ENCODE measurements at regions of chr1 and their contacts with region 1.

Region 1: DNA sequence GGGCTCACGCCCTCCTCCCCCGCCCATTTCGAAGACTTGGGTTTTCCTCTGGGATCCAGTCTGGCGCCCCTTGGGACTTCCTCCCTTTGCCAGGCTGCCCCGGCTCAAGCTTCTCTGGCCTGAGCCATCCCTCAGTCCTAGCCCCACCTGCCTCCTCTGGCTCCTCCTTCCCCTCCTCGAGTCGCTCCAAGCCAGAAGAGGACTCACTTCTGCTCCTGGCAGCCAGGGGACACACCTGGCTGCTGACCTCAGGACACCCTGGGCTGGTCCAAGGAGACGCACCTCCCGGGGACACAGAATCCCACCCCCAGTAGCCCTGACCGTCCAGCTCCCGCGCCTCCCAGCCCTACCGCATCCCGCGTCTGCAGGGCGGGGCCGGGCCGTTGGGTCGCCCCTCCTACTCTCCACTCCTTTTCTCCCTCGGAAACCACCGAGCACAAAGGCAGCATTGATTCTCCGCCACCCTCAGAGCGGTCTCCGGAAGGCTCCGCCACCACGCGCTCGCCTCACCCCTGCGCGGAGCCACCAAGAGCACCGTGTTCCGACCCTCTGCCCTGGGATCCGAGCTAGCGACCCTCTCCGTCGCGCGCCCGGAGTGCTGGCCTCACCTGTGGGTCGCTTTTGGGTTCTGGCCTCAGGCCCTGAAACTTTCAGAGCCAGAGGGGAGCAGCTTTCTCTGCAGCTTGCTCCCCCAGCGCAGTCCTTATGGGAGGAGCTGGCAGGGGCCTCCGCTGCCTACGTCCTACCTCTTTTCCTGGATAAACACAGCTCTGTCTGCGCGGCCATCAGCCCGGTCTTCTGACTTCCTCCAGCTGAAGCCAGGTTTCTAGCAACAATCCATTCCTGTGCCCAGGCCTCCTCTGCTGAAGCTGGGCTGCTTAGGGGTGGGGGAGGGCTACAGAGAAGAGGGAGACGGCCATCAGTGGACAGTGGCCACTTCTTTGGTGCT is at the start of gene C2CD4D:
- DNase-seq: peak; percentile 9
- ATAC-seq: peak; percentile 84
- H3K4me3 ChIP-seq: peak within 1 kb of the TSS; percentile 42; the same call in 1 of the 2 replicates
- H3K27ac ChIP-seq: peak within 1 kb of the TSS; percentile 26; the same call in 1 of the 2 replicates
- H3K4me1 ChIP-seq: peaks cover 10% of the 10 kb centered on the region; the same call in 1 of the 2 replicates
- H3K27me3 ChIP-seq: peaks cover 0 to 8% of the 10 kb centered on the region in 2 experiments
- CTCF ChIP-seq: no peak
- EP300 ChIP-seq: no peak
- POLR2A ChIP-seq: peak; percentile 66
- RAD21 ChIP-seq: no peak
- polyA plus RNA-seq, gene C2CD4D: 0.03 TPM in 1 of 2 experiments, not detected in the other

Region 2: DNA sequence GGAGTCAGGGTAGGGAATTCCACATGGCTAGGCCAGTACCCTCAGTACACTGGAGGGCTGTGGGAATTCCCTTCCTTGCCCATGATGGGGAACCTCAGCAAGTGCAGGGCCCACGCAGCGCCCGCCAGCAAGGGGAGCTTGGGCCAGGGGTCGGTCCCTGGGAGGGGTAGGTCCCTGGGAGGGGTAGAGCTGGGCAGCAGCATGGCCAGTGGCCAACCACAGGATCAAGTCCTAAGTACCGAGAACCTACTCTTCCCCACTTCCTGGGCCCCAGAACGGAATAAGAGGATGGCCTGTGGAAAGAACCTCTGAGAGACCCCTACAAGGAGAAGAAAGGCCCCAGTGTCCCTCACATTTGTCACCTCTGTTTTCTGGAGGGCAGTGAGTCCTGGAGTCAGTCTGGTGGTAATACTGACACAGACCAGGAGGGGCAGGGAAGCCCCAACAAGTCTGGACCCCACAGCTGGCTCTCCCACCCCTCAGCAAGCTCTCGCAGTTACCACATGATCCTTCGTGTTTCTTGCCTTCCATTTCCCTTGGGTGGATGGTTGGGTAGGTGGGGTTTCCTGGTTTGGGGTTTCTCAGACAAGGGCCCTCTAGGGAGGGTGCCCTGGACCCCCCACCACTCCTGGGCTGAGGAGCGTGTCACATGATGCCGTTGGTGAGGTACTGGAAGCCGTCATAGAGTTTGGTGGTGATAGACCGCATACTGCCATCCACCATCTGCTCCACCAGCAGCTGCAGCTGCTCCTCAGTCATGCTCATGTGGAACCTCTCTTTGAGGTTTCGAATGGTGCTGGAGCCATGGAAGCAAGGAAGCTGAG is 547.3 kb before region 1 on chr1:
- CTCF ChIA-PET with region 1: no interaction called
- POLR2A ChIA-PET with region 1: no interaction called
- RAD21 ChIA-PET with region 1: no interaction called
- SMC1A ChIA-PET with region 1: no interaction called
- in situ Hi-C with region 1: loop called (anchors 10 kb)
- intact Hi-C with region 1: no loop called
- DNase-seq: no peak
- ATAC-seq: peak; percentile 35; the same call in 2 of the 3 replicates
- H3K4me3 ChIP-seq: no peak overlapping the region
- H3K27ac ChIP-seq: no peak overlapping the region
- H3K4me1 ChIP-seq: no peaks in the 10 kb centered on the region
- H3K27me3 ChIP-seq: no peaks in the 10 kb centered on the region
- CTCF ChIP-seq: 0 out of 6 replicates have a peak, but pooled peaks of 1 of the 3 experiments have one; percentile 15
- EP300 ChIP-seq: no peak
- POLR2A ChIP-seq: peak; percentile 74
- RAD21 ChIP-seq: no peak

Region 3: GRCh38 chr1:151594143-151594625 is 245.5 kb before region 1 on chr1:
- CTCF ChIA-PET with region 1: interaction called, 20 read pairs
- POLR2A ChIA-PET with region 1: interaction called, 4 read pairs
- RAD21 ChIA-PET with region 1: interaction called, 8 read pairs
- SMC1A ChIA-PET with region 1: interaction called, 16 read pairs
- in situ Hi-C with region 1: loop called (anchors 5 kb)
- intact Hi-C with region 1: loop called (anchors 1 kb)
- DNase-seq: no peak
- ATAC-seq: peak; percentile 99
- H3K4me3 ChIP-seq: no peak overlapping the region
- H3K27ac ChIP-seq: no peak overlapping the region
- H3K4me1 ChIP-seq: no peaks in the 10 kb centered on the region
- H3K27me3 ChIP-seq: no peaks in the 10 kb centered on the region; a peak in 1 of 4 replicates
- CTCF ChIP-seq: peak; percentile 95 to 97 (median 95)
- EP300 ChIP-seq: no peak
- POLR2A ChIP-seq: no peak
- RAD21 ChIP-seq: peak; percentile 81

Region 4: GRCh38 chr1:151710187-151710840 is 129.4 kb before region 1 on chr1:
- CTCF ChIA-PET with region 1: no interaction called
- POLR2A ChIA-PET with region 1: no interaction called
- RAD21 ChIA-PET with region 1: no interaction called
- SMC1A ChIA-PET with region 1: no interaction called
- in situ Hi-C with region 1: no loop called
- intact Hi-C with region 1: loop called (anchors 10 kb)
- DNase-seq: no peak
- ATAC-seq: no peak
- H3K4me3 ChIP-seq: no peak overlapping the region
- H3K27ac ChIP-seq: no peak overlapping the region
- H3K4me1 ChIP-seq: no peaks in the 10 kb centered on the region
- H3K27me3 ChIP-seq: peaks cover 0 to 3% of the 10 kb centered on the region in 2 experiments; a peak in 2 of 4 replicates
- CTCF ChIP-seq: no peak
- EP300 ChIP-seq: no peak
- POLR2A ChIP-seq: no peak
- RAD21 ChIP-seq: no peak

Region 5: DNA sequence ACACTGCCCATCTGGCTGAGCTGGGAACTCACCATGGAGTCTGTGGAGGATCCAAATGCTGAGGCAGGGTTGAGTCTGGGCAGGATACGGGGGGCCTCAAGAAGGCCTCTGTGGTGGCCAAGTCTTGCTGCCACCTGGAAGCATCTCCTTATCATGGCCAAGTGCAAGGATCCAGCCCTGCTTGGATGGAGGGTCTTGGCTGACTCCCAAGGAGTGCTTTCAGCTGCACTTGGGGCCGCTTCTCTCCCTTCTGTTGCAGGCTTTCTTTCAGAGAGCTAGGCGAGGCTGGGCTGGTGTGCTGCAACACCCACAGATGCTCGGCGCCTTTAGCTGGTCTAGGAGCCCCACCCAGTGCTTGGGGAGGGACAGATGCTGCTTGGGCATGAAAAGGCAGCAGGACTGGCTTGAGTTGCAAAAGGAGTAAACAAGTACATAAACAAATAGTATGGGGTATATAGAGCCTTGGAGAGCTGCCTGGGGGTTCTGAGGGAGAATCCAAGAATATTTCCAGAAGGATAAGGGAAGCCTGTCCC is 13.7 kb after region 1 on chr1 and contains the start of gene THEM5:
- CTCF ChIA-PET with region 1: interaction called, 3 read pairs
- POLR2A ChIA-PET with region 1: interaction called, 8 read pairs
- RAD21 ChIA-PET with region 1: interaction called, 10 read pairs
- SMC1A ChIA-PET with region 1: interaction called, 7 read pairs
- in situ Hi-C with region 1: no loop called
- intact Hi-C with region 1: no loop called
- DNase-seq: no peak
- ATAC-seq: peak; percentile 36; the same call in 1 of the 3 replicates
- H3K4me3 ChIP-seq: no peak within 1 kb of the TSS
- H3K27ac ChIP-seq: no peak within 1 kb of the TSS
- H3K4me1 ChIP-seq: no peaks in the 10 kb centered on the region
- H3K27me3 ChIP-seq: peaks cover 0 to 3% of the 10 kb centered on the region in 2 experiments; a peak in 1 of 4 replicates
- CTCF ChIP-seq: no peak; a peak in 1 of 6 replicates
- EP300 ChIP-seq: no peak
- POLR2A ChIP-seq: no peak
- RAD21 ChIP-seq: peak; percentile 26; the same call in 1 of the 2 replicates
- polyA plus RNA-seq, gene THEM5: not detected